ENCODE measurements at regions of chr1 and their contacts with region 1.

Region 1: GRCh38 chr1:40774266-40774998 is 9.2 kb upstream of the KCNQ4 start:
- DNase-seq: peak; percentile 43 to 81 (median 72)
- ATAC-seq: peak; percentile 66
- H3K4me3 ChIP-seq: no peak overlapping the region
- H3K4me3 Mint-ChIP-seq: no peak overlapping the region
- H3K27ac ChIP-seq: no peak overlapping the region
- H3K27ac Mint-ChIP-seq: no peak overlapping the region
- H3K4me1 ChIP-seq: no peaks in the 10 kb centered on the region
- H3K4me1 Mint-ChIP-seq: no peaks in the 10 kb centered on the region
- H3K27me3 ChIP-seq: no peaks in the 10 kb centered on the region
- H3K27me3 Mint-ChIP-seq: no peaks in the 10 kb centered on the region
- CTCF ChIP-seq: peak; percentile 84

Region 2: GRCh38 chr1:40653851-40654537 is 120.4 kb before region 1 on chr1:
- CTCF ChIA-PET with region 1: no interaction called
- POLR2A ChIA-PET with region 1: no interaction called
- intact Hi-C with region 1: no loop called
- DNase-seq: no peak
- ATAC-seq: no peak
- H3K4me3 ChIP-seq: no peak overlapping the region
- H3K4me3 Mint-ChIP-seq: no peak overlapping the region
- H3K27ac ChIP-seq: no peak overlapping the region
- H3K27ac Mint-ChIP-seq: no peak overlapping the region
- H3K4me1 ChIP-seq: peaks cover 6% of the 10 kb centered on the region
- H3K4me1 Mint-ChIP-seq: peaks cover 6% of the 10 kb centered on the region
- H3K27me3 ChIP-seq: no peaks in the 10 kb centered on the region
- H3K27me3 Mint-ChIP-seq: no peaks in the 10 kb centered on the region
- CTCF ChIP-seq: no peak

Region 3: DNA sequence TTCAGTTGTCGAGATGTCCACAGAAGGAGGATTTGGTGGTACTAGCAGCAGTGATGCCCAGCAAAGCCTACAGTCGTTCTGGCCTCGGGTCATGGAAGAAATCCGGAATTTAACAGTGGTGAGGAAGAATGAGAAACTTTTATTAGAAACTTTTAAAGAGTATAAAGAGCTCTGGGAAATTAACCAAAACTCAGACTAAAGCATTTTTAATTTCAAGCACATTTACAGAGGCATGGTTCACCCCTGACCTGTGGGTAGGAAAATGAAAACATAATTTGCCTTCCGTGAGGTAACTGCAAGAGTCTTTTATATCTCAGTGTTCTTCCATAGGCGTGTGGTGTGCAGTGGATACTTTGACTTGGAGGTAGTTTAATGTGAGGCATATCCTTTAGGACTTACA is 35.6 kb before region 1 on chr1:
- CTCF ChIA-PET with region 1: no interaction called
- POLR2A ChIA-PET with region 1: no interaction called
- intact Hi-C with region 1: no loop called
- DNase-seq: no peak
- ATAC-seq: no peak
- H3K4me3 ChIP-seq: no peak overlapping the region
- H3K4me3 Mint-ChIP-seq: no peak overlapping the region
- H3K27ac ChIP-seq: no peak overlapping the region
- H3K27ac Mint-ChIP-seq: no peak overlapping the region
- H3K4me1 ChIP-seq: peaks cover 4% of the 10 kb centered on the region
- H3K4me1 Mint-ChIP-seq: peaks cover 44% of the 10 kb centered on the region
- H3K27me3 ChIP-seq: no peaks in the 10 kb centered on the region
- H3K27me3 Mint-ChIP-seq: no peaks in the 10 kb centered on the region
- CTCF ChIP-seq: no peak

Region 4: DNA sequence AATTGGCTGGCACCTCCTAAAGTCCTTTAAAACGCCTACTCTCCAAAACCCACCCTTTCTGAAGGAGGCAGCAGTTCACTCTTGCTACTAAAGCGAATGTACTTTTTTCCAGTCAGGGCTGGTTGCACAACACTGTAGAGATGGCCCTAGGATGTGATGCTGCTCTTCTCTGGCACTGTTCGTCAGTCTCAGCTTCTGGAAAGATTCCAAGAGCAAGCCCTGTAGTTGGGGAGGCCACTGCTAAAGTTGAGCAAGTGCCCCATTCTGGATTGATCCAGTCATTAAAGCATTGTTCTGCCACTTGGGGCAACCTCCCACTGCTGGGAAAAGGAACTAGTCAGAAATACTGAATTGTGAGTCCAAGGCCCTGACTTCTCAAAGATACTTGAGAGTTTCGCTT is 19.4 kb before region 1 on chr1:
- CTCF ChIA-PET with region 1: interaction called, 22 read pairs
- POLR2A ChIA-PET with region 1: no interaction called
- intact Hi-C with region 1: no loop called
- DNase-seq: no peak
- ATAC-seq: no peak
- H3K4me3 ChIP-seq: no peak overlapping the region
- H3K4me3 Mint-ChIP-seq: no peak overlapping the region
- H3K27ac ChIP-seq: no peak overlapping the region
- H3K27ac Mint-ChIP-seq: no peak overlapping the region
- H3K4me1 ChIP-seq: no peaks in the 10 kb centered on the region
- H3K4me1 Mint-ChIP-seq: peaks cover 2% of the 10 kb centered on the region
- H3K27me3 ChIP-seq: no peaks in the 10 kb centered on the region
- H3K27me3 Mint-ChIP-seq: no peaks in the 10 kb centered on the region
- CTCF ChIP-seq: no peak

Region 5: GRCh38 chr1:40796939-40797667 is 22.7 kb after region 1 on chr1:
- CTCF ChIA-PET with region 1: interaction called, 67 read pairs
- POLR2A ChIA-PET with region 1: interaction called, 6 read pairs
- intact Hi-C with region 1: no loop called
- DNase-seq: no peak
- ATAC-seq: no peak
- H3K4me3 ChIP-seq: no peak overlapping the region
- H3K4me3 Mint-ChIP-seq: peak overlapping the region; percentile 30
- H3K27ac ChIP-seq: no peak overlapping the region
- H3K27ac Mint-ChIP-seq: peak overlapping the region; percentile 14
- H3K4me1 ChIP-seq: peaks cover 60% of the 10 kb centered on the region
- H3K4me1 Mint-ChIP-seq: peaks cover 57% of the 10 kb centered on the region
- H3K27me3 ChIP-seq: no peaks in the 10 kb centered on the region
- H3K27me3 Mint-ChIP-seq: no peaks in the 10 kb centered on the region
- CTCF ChIP-seq: no peak

Region 6: GRCh38 chr1:40849801-40850592 is 75.6 kb after region 1 on chr1:
- CTCF ChIA-PET with region 1: interaction called, 286 read pairs
- POLR2A ChIA-PET with region 1: interaction called, 4 read pairs
- intact Hi-C with region 1: loop called (anchors 1 kb)
- DNase-seq: peak; percentile 57 to 88 (median 80)
- ATAC-seq: peak; percentile 91
- H3K4me3 ChIP-seq: peak overlapping the region; percentile 4 to 6
- H3K4me3 Mint-ChIP-seq: peak overlapping the region; percentile 55
- H3K27ac ChIP-seq: no peak overlapping the region
- H3K27ac Mint-ChIP-seq: no peak overlapping the region
- H3K4me1 ChIP-seq: peaks cover 5% of the 10 kb centered on the region
- H3K4me1 Mint-ChIP-seq: peaks cover 15% of the 10 kb centered on the region
- H3K27me3 ChIP-seq: no peaks in the 10 kb centered on the region
- H3K27me3 Mint-ChIP-seq: no peaks in the 10 kb centered on the region
- CTCF ChIP-seq: peak; percentile 76

Region 7: GRCh38 chr1:40951943-40952743 is 177.7 kb after region 1 on chr1:
- CTCF ChIA-PET with region 1: interaction called, 21 read pairs
- POLR2A ChIA-PET with region 1: no interaction called
- intact Hi-C with region 1: loop called (anchors 1 kb)
- DNase-seq: peak; percentile 25 to 71 (median 61)
- ATAC-seq: peak; percentile 64
- H3K4me3 ChIP-seq: no peak overlapping the region
- H3K4me3 Mint-ChIP-seq: no peak overlapping the region
- H3K27ac ChIP-seq: no peak overlapping the region
- H3K27ac Mint-ChIP-seq: no peak overlapping the region
- H3K4me1 ChIP-seq: no peaks in the 10 kb centered on the region
- H3K4me1 Mint-ChIP-seq: peaks cover 5% of the 10 kb centered on the region
- H3K27me3 ChIP-seq: no peaks in the 10 kb centered on the region
- H3K27me3 Mint-ChIP-seq: peaks cover 30% of the 10 kb centered on the region
- CTCF ChIP-seq: peak; percentile 88

Measured in CD8-positive, alpha-beta T cell (primary cell).